ENCODE measurements at regions of chr11 and their contacts with region 1.

Region 1: GRCh38 chr11:26761361-26761809 is 39.5 kb upstream of the SLC5A12 start:
- DNase-seq: no peak
- ATAC-seq: no peak
- H3K4me3 ChIP-seq: no peak overlapping the region
- H3K27ac ChIP-seq: no peak overlapping the region
- H3K4me1 ChIP-seq: peaks cover 0 to 7% of the 10 kb centered on the region in 2 donors
- H3K27me3 ChIP-seq: no peaks in the 10 kb centered on the region

Region 2: GRCh38 chr11:26820739-26821138 is 59.4 kb after region 1 on chr11:
- intact Hi-C with region 1: loop called in 1 of 2 experiments (anchors 2 kb)
- DNase-seq: no peak
- ATAC-seq: peak; percentile 66
- H3K4me3 ChIP-seq: no peak overlapping the region
- H3K27ac ChIP-seq: no peak overlapping the region
- H3K4me1 ChIP-seq: no peaks in the 10 kb centered on the region
- H3K27me3 ChIP-seq: no peaks in the 10 kb centered on the region